Panc1 (cell line): ENCODE measurements at regions of chr7 and their contacts with region 1.

Region 1: DNA sequence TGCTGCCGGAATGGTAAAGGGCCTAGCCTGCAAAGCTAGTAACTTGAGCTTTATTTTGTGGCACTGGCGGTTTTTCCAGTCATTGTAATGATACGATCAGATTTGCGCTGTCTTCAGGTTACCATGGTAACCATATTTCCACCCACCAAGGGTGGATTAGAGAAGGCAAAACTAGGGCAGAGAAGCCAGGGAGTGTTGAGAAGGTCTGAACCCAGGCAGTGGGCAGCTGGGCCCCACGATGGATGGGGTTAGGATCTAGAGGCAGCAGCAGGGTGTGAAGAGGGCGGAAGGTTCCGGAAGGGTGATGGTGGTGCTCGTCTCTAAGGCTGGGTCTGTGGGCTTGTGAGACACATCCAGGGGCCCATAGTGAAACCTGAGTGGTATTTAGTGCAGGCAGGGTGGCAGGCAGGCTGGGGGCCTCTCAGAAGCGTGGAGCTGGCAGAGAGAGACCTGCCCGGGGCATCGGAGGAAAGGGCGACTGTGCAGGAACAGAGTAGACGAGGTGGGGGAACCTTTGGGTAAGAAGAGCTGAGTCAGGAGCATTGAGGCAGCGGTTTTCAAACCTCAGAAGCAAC is 87.9 kb upstream of the GTF2I start:
- DNase-seq: no peak
- ATAC-seq: no peak
- H3K4me3 ChIP-seq: no peak overlapping the region
- H3K27ac ChIP-seq: no peak overlapping the region
- H3K4me1 ChIP-seq: no peaks in the 10 kb centered on the region
- H3K27me3 ChIP-seq: no peaks in the 10 kb centered on the region
- CTCF ChIP-seq: no peak

Region 2: GRCh38 chr7:74417419-74417971 is 152.1 kb before region 1 on chr7:
- CTCF ChIA-PET with region 1: no interaction called
- POLR2A ChIA-PET with region 1: no interaction called
- in situ Hi-C with region 1: no loop called
- intact Hi-C with region 1: loop called (anchors 5 kb)
- DNase-seq: peak; percentile 77
- ATAC-seq: peak; percentile 96
- H3K4me3 ChIP-seq: no peak overlapping the region
- H3K27ac ChIP-seq: peak overlapping the region; percentile 64
- H3K4me1 ChIP-seq: no peaks in the 10 kb centered on the region
- H3K27me3 ChIP-seq: no peaks in the 10 kb centered on the region
- CTCF ChIP-seq: peak; percentile 97

Region 3: GRCh38 chr7:74525880-74526279 is 43.7 kb before region 1 on chr7:
- CTCF ChIA-PET with region 1: no interaction called
- POLR2A ChIA-PET with region 1: interaction called, 10 read pairs
- in situ Hi-C with region 1: no loop called
- intact Hi-C with region 1: no loop called
- DNase-seq: no peak
- ATAC-seq: 0 out of 2 replicates have a peak, but pooled peaks have one; percentile 13
- H3K4me3 ChIP-seq: no peak overlapping the region
- H3K27ac ChIP-seq: no peak overlapping the region
- H3K4me1 ChIP-seq: no peaks in the 10 kb centered on the region
- H3K27me3 ChIP-seq: no peaks in the 10 kb centered on the region
- CTCF ChIP-seq: no peak

Region 4: DNA sequence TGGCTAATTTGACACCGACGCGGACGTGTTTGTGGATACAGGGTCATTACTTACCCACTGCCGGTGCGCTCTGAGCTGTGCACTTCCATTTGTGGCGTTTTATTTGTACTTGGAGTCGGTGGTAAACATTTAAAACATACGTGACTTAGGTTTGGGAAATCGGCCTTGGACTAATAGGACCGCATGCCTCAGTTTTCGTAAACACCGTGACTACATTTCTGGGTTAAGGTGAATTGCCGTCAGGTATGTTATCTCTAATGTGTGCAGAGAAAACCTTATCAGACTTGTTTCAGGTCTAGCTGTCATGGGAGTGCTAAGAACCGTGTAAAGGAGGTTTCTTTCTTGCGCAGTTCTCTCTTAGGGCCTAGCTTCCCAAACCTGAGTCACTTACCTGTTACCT is 152.6 kb after region 1 on chr7:
- CTCF ChIA-PET with region 1: interaction called, 10 read pairs
- POLR2A ChIA-PET with region 1: no interaction called
- in situ Hi-C with region 1: no loop called
- intact Hi-C with region 1: no loop called
- DNase-seq: no peak
- ATAC-seq: no peak
- H3K4me3 ChIP-seq: no peak overlapping the region
- H3K27ac ChIP-seq: no peak overlapping the region
- H3K4me1 ChIP-seq: peaks cover 4% of the 10 kb centered on the region; the same call in 1 of the 2 replicates
- H3K27me3 ChIP-seq: no peaks in the 10 kb centered on the region
- CTCF ChIP-seq: no peak